Right ventricle myocardium inferior (tissue), 1 donor: ENCODE measurements at regions of chr2 and their contacts with region 1.

Region 1: GRCh38 chr2:191501561-191502168 is 176.3 kb upstream of the NABP1 start:
- DNase-seq: no peak
- ATAC-seq: peak; percentile 58

Region 2: DNA sequence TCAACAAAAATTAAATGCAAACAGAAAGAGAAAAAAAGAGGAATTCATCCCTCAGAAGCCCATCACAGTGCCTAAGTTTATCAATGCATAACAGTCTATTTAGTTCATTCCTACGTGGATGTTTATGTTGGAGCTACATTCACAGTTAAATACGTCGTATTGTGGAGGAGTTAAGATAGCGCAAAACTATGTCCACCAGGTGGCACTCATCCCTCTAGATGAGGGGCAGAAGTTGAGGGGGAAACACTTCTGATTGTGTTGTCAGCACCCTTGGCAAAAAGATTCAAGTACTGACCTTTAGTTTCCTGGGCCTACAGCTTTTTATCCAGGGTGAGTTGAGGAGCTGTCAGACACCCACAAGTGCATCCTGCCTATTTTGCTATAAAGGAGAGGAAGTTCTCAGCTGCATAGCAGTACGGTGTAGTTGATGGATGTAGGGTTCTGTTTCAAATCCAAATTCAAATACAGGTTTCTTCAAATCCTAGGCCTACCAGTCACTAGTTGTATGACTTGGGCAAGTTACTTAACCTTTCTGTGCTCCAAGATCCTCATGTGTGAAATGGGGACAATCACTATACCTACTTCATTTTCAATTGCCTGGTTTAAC is 283.3 kb before region 1 on chr2:
- intact Hi-C with region 1: loop called (anchors 2 kb)
- DNase-seq: no peak
- ATAC-seq: peak; percentile 68

Region 3: DNA sequence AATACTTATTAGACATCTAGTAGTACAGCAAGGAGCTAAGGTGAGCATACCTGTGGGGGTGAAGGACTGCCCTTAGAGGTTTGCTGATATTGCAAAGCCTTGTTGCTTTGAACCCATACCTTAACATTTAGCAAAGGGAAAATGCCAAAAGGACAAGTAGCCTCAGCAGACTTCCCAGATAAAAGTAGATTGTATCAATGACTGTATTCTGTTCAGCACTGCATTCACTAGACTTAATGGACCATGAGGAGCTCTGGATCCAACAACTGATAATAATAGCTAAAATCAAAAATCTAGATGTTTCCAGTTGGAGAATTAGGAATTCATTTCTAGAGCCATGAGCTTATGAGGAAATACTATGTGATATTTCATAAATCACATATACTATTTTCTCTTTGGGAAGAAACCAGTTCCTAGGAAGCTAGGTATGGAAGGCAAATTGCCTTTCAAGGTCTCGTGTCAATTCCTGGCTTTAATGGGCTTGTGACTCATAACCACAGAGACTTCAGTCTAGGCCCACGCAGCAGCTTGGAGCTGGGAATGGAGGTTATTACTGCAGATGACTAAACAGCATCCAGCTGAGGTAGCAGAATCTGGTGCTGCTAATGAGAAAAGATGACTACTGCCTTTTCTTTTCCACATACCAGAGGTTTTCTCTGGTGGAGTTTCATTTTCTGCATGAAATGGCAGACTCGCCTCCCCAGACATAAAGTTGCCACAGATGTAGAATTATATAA is 14.9 kb before region 1 on chr2:
- intact Hi-C with region 1: no loop called
- DNase-seq: no peak
- ATAC-seq: no peak